CD4-positive, alpha-beta T cell (primary cell): ENCODE measurements at regions of chr4 and their contacts with region 1.

Region 1: DNA sequence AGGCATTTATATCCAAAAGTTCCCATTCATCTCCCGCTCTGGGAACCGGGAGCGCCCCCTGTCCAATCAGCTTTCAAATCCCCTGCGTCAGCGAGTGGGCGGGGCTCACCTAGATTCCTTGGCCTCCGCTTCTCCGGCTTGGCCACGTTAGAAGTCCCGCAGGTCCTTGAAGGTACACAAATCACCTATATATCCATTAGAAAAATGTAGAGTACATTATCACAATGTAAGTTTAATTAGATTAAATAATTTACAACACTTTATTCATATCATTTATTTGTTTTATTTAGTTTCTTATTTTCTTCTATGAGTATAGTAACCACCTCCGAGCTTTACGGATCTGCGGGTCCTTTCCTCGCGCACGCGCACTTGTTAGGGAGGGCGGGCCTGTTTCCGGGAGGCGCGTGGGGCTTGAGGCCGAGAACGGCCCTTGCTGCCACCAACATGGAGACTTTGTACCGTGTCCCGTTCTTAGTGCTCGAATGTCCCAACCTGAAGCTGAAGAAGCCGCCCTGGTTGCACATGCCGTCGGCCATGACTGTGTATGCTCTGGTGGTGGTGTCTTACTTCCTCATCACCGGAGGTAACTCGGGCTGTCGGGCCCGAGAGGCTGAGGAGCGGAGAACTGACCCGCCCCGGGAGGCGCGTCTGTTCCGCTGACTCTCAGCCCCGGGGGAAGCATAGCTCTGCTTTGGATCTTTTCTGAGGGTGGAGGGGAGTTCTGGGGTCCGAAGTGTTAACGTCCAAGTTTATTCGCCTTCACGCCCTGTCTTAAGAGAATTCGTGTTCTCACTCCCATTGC is at the start of gene OSTC:
- DNase-seq: peak; percentile 86 to 96 (median 89)
- ATAC-seq: peak; percentile 89
- H3K4me3 ChIP-seq: peak within 1 kb of the TSS; percentile 85
- H3K4me3 Mint-ChIP-seq: peak within 1 kb of the TSS; percentile 93
- H3K27ac ChIP-seq: peak within 1 kb of the TSS; percentile 84
- H3K27ac Mint-ChIP-seq: peak within 1 kb of the TSS; percentile 99
- H3K4me1 ChIP-seq: peaks cover 15% of the 10 kb centered on the region
- H3K4me1 Mint-ChIP-seq: peaks cover 50% of the 10 kb centered on the region
- H3K27me3 ChIP-seq: no peaks in the 10 kb centered on the region
- H3K27me3 Mint-ChIP-seq: no peaks in the 10 kb centered on the region
- CTCF ChIP-seq: peak; percentile 21
- total RNA-seq, gene OSTC: 21.8 to 25.5 TPM

Region 2: GRCh38 chr4:107449611-107450369 is 1200.6 kb before region 1 on chr4:
- CTCF ChIA-PET with region 1: no interaction called
- POLR2A ChIA-PET with region 1: no interaction called
- intact Hi-C with region 1: no loop called
- DNase-seq: no peak
- ATAC-seq: no peak
- H3K4me3 ChIP-seq: no peak overlapping the region
- H3K4me3 Mint-ChIP-seq: no peak overlapping the region
- H3K27ac ChIP-seq: no peak overlapping the region
- H3K27ac Mint-ChIP-seq: no peak overlapping the region
- H3K4me1 ChIP-seq: no peaks in the 10 kb centered on the region
- H3K4me1 Mint-ChIP-seq: no peaks in the 10 kb centered on the region
- H3K27me3 ChIP-seq: no peaks in the 10 kb centered on the region
- H3K27me3 Mint-ChIP-seq: peaks cover 11% of the 10 kb centered on the region
- CTCF ChIP-seq: no peak

Region 3: DNA sequence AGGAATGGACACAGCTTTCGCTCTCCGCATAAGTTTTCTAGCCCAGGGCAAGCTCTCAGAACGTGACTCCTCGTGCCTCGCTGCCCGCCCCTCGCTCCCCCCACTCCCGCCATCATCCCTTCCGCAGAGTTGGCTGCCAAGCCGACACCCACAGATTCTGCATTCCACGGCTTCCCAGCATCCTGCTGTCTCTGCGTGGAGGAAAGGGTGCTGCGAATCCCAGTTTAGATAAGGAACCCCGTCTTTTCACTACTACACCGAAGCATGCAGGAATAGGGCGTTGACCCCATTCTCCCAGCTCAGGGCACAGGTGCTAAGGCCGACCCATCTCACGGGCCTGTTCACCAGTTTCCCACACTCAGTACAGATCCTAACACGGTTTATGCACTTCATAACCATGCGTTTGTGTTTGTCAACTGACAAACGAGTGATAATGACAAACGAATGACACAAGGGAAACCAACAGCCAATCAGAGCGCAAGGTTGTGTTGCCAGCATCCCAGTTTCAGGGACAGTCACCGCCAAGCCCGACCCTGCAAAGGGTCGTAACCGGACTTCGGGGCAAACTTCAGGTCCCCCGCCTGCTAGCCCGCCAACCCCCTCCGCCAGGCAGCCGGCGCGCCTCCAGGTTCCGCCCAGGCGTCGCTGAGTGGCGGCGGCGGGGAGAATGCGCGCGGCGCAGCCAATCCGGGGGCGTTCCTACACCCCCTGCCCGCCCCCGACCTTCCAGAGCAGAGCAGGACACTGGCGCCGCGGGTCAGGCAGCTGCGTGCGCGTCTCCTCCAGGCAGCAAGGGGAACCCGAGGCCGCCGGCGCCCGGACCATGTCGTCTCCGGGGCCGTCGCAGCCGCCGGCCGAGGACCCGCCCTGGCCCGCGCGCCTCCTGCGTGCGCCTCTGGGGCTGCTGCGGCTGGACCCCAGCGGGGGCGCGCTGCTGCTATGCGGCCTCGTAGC is 719.3 kb before region 1 on chr4 and contains the start of gene CYP2U1:
- CTCF ChIA-PET with region 1: no interaction called
- POLR2A ChIA-PET with region 1: no interaction called
- intact Hi-C with region 1: loop called in 1 of 2 experiments (anchors 5 kb)
- DNase-seq: peak; percentile 54 to 90 (median 74)
- ATAC-seq: peak; percentile 93
- H3K4me3 ChIP-seq: peak within 1 kb of the TSS; percentile 81
- H3K4me3 Mint-ChIP-seq: peak within 1 kb of the TSS; percentile 96
- H3K27ac ChIP-seq: peak within 1 kb of the TSS; percentile 2 to 4
- H3K27ac Mint-ChIP-seq: peak within 1 kb of the TSS; percentile 89
- H3K4me1 ChIP-seq: peaks cover 16% of the 10 kb centered on the region
- H3K4me1 Mint-ChIP-seq: peaks cover 50% of the 10 kb centered on the region
- H3K27me3 ChIP-seq: no peaks in the 10 kb centered on the region
- H3K27me3 Mint-ChIP-seq: no peaks in the 10 kb centered on the region
- CTCF ChIP-seq: no peak
- total RNA-seq, gene CYP2U1: 2.9 to 4.0 TPM

Region 4: GRCh38 chr4:107989537-107990386 is 660.7 kb before region 1 on chr4 and contains the start of gene HADH:
- CTCF ChIA-PET with region 1: no interaction called
- POLR2A ChIA-PET with region 1: interaction called, 4 read pairs
- intact Hi-C with region 1: loop called in 1 of 2 experiments (anchors 2 kb)
- DNase-seq: peak; percentile 85 to 98 (median 94)
- ATAC-seq: peak; percentile 97
- H3K4me3 ChIP-seq: peak within 1 kb of the TSS; percentile 81
- H3K4me3 Mint-ChIP-seq: peak within 1 kb of the TSS; percentile 92
- H3K27ac ChIP-seq: peak within 1 kb of the TSS; percentile 37 to 81
- H3K27ac Mint-ChIP-seq: peak within 1 kb of the TSS; percentile 88
- H3K4me1 ChIP-seq: peaks cover 14% of the 10 kb centered on the region
- H3K4me1 Mint-ChIP-seq: peaks cover 83% of the 10 kb centered on the region
- H3K27me3 ChIP-seq: no peaks in the 10 kb centered on the region
- H3K27me3 Mint-ChIP-seq: no peaks in the 10 kb centered on the region
- CTCF ChIP-seq: no peak
- total RNA-seq, gene HADH: 16.1 to 16.3 TPM

Region 5: GRCh38 chr4:108180513-108180912 is 469.9 kb before region 1 on chr4:
- CTCF ChIA-PET with region 1: no interaction called
- POLR2A ChIA-PET with region 1: no interaction called
- intact Hi-C with region 1: no loop called
- DNase-seq: no peak
- ATAC-seq: no peak
- H3K4me3 ChIP-seq: no peak overlapping the region
- H3K4me3 Mint-ChIP-seq: no peak overlapping the region
- H3K27ac ChIP-seq: no peak overlapping the region
- H3K27ac Mint-ChIP-seq: no peak overlapping the region
- H3K4me1 ChIP-seq: no peaks in the 10 kb centered on the region
- H3K4me1 Mint-ChIP-seq: peaks cover 35% of the 10 kb centered on the region
- H3K27me3 ChIP-seq: no peaks in the 10 kb centered on the region
- H3K27me3 Mint-ChIP-seq: no peaks in the 10 kb centered on the region
- CTCF ChIP-seq: peak; percentile 42

Region 6: DNA sequence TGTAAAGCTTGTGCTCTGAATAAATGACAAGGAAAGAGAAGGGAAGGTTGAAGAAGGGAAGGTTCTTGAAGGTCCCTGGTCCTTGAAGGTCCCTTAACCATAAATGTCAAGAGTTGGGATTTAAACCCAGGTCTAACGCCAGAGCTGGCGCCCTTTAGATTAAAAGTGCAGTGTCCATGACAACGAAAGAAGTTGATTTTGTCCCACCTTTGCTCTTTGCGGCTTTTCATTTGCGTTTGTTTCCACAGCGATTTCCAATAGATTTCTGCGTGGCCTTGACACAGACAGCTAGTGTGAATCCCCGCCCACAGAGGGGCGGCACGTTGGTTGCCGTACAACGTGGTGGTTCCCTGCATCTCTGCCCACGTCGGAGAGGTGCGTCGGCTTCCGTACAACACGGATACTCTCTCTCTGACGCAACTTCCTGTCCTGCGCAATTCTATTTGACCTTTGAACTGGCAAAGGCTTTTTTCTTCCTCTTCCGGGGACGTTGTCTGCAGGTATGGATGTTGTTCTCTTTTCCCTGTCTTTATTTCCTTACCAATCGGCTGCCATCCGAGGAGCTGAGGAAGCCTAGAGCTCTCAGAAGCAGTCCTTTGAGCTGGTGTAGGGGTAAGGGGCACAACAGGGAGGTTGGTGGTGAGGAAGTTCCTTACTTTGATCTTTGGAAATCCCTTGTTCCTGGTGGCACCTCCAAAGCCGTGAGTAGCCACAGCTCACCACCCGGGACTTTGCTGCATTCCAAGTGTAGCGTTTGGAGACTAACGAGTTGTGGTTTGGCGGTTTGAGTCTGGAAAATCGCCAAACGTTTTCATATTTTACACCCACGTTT is 30.1 kb before region 1 on chr4 and contains the start of gene RPL34:
- CTCF ChIA-PET with region 1: interaction called, 3 read pairs
- POLR2A ChIA-PET with region 1: interaction called, 52 read pairs
- intact Hi-C with region 1: loop called (anchors 1 to 2 kb)
- DNase-seq: peak; percentile 93 to 99 (median 97)
- ATAC-seq: peak; percentile 98
- H3K4me3 ChIP-seq: peak within 1 kb of the TSS; percentile 78
- H3K4me3 Mint-ChIP-seq: peak within 1 kb of the TSS; percentile 97
- H3K27ac ChIP-seq: peak within 1 kb of the TSS; percentile 85
- H3K27ac Mint-ChIP-seq: peak within 1 kb of the TSS; percentile 99
- H3K4me1 ChIP-seq: peaks cover 36% of the 10 kb centered on the region
- H3K4me1 Mint-ChIP-seq: peaks cover 65% of the 10 kb centered on the region
- H3K27me3 ChIP-seq: no peaks in the 10 kb centered on the region
- H3K27me3 Mint-ChIP-seq: no peaks in the 10 kb centered on the region
- CTCF ChIP-seq: no peak
- total RNA-seq, gene RPL34: 3,283 to 3,551 TPM

Region 7: DNA sequence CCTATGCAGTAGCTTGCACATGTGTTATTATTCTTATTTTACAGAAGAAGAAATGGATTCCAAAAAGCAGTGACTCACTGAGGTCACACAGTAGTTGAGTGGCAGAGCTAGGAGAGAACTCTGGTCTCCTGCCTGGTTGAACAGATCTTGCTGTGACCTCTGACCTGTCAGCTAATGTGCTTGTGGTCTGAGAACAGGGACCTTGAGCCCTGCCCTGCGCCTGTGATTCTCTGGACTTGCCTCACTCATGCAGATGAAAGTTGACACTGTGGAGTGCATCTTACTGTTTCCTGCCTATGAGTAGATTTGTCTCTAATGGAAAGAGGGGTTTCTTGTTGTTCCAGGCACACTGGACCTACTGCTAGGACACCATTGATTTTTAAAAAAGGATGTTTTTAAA is 80.2 kb after region 1 on chr4:
- CTCF ChIA-PET with region 1: no interaction called
- POLR2A ChIA-PET with region 1: no interaction called
- intact Hi-C with region 1: no loop called
- DNase-seq: no peak
- ATAC-seq: no peak
- H3K4me3 ChIP-seq: no peak overlapping the region
- H3K4me3 Mint-ChIP-seq: no peak overlapping the region
- H3K27ac ChIP-seq: no peak overlapping the region
- H3K27ac Mint-ChIP-seq: no peak overlapping the region
- H3K4me1 ChIP-seq: no peaks in the 10 kb centered on the region
- H3K4me1 Mint-ChIP-seq: no peaks in the 10 kb centered on the region
- H3K27me3 ChIP-seq: peaks cover 0 to 8% of the 10 kb centered on the region in 2 experiments
- H3K27me3 Mint-ChIP-seq: peaks cover 15% of the 10 kb centered on the region
- CTCF ChIP-seq: no peak

Region 8: DNA sequence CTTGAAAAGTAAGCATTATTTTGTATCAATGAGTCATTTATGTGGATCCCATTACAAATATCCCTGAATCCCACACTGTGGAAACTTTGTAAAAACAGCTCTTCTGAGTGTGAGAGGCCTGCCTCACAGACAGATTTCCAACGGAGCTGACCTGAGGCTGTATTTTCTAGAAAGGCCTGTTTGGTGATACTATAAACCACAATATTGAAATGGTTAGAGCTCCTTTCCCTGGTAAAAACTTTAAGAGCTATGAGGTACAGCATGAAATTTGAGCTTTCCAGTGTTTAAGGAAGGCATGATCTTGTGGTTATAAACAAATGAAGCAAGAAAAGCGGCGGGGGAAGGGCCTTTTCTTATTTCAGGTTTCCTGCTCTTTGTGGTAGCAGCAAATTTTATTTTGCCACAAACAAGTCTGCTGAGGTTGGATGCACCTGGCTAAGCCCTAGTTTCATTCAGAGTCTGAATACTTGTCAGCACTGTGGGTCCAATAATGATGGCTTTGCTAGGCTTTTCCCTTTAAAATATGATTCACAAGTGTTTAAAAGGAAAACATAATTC is 199.3 kb after region 1 on chr4:
- CTCF ChIA-PET with region 1: no interaction called
- POLR2A ChIA-PET with region 1: no interaction called
- intact Hi-C with region 1: no loop called
- DNase-seq: peak in 5 of 14 experiments; percentile 6 to 40 (median 7)
- ATAC-seq: no peak
- H3K4me3 ChIP-seq: no peak overlapping the region
- H3K4me3 Mint-ChIP-seq: no peak overlapping the region
- H3K27ac ChIP-seq: no peak overlapping the region
- H3K27ac Mint-ChIP-seq: no peak overlapping the region
- H3K4me1 ChIP-seq: no peaks in the 10 kb centered on the region
- H3K4me1 Mint-ChIP-seq: peaks cover 33% of the 10 kb centered on the region
- H3K27me3 ChIP-seq: no peaks in the 10 kb centered on the region
- H3K27me3 Mint-ChIP-seq: no peaks in the 10 kb centered on the region
- CTCF ChIP-seq: no peak

Region 9: GRCh38 chr4:109815151-109816081 is 1165.0 kb after region 1 on chr4 and contains the start of gene GAR1:
- CTCF ChIA-PET with region 1: no interaction called
- POLR2A ChIA-PET with region 1: no interaction called
- intact Hi-C with region 1: loop called in 1 of 2 experiments (anchors 10 kb)
- DNase-seq: peak; percentile 68 to 96 (median 82)
- ATAC-seq: peak; percentile 91
- H3K4me3 ChIP-seq: peak within 1 kb of the TSS; percentile 67
- H3K4me3 Mint-ChIP-seq: peak within 1 kb of the TSS; percentile 96
- H3K27ac ChIP-seq: peak within 1 kb of the TSS; percentile 90 to 96
- H3K27ac Mint-ChIP-seq: peak within 1 kb of the TSS; percentile 98
- H3K4me1 ChIP-seq: peaks cover 18% of the 10 kb centered on the region
- H3K4me1 Mint-ChIP-seq: peaks cover 42% of the 10 kb centered on the region
- H3K27me3 ChIP-seq: no peaks in the 10 kb centered on the region
- H3K27me3 Mint-ChIP-seq: no peaks in the 10 kb centered on the region
- CTCF ChIP-seq: no peak
- total RNA-seq, gene GAR1: 8.4 to 9.6 TPM